ENCODE measurements at regions of chr1 and their contacts with region 1.

Region 1: GRCh38 chr1:156212833-156213643 is at the start of gene PMF1:
- DNase-seq: peak; percentile 92
- ATAC-seq: peak; percentile 98
- H3K4me3 ChIP-seq: peak within 1 kb of the TSS; percentile 75 to 88 (median 82)
- H3K27ac ChIP-seq: peak within 1 kb of the TSS; percentile 99
- H3K4me1 ChIP-seq: peaks cover 36% of the 10 kb centered on the region
- H3K27me3 ChIP-seq: no peaks in the 10 kb centered on the region; a peak in 1 of 5 replicates
- CTCF ChIP-seq: no peak
- EP300 ChIP-seq: no peak
- POLR2A ChIP-seq: peak; percentile 82 to 92
- RAD21 ChIP-seq: no peak; the same call in 1 of the 2 replicates
- total RNA-seq, gene PMF1: 89.0 and 94.7 TPM in 2 replicates

Region 2: GRCh38 chr1:155706091-155706619 is 506.9 kb before region 1 on chr1:
- CTCF ChIA-PET with region 1: no interaction called
- POLR2A ChIA-PET with region 1: no interaction called
- in situ Hi-C with region 1: no loop called
- intact Hi-C with region 1: no loop called
- DNase-seq: no peak
- ATAC-seq: no peak
- H3K4me3 ChIP-seq: no peak overlapping the region
- H3K27ac ChIP-seq: no peak overlapping the region
- H3K4me1 ChIP-seq: no peaks in the 10 kb centered on the region
- H3K27me3 ChIP-seq: no peaks in the 10 kb centered on the region; a peak in 1 of 5 replicates
- CTCF ChIP-seq: no peak
- EP300 ChIP-seq: no peak
- POLR2A ChIP-seq: no peak
- RAD21 ChIP-seq: no peak

Region 3: GRCh38 chr1:156129706-156130581 is 83.1 kb before region 1 on chr1:
- CTCF ChIA-PET with region 1: no interaction called
- POLR2A ChIA-PET with region 1: interaction called, 11 read pairs
- in situ Hi-C with region 1: no loop called
- intact Hi-C with region 1: no loop called
- DNase-seq: peak; percentile 98
- ATAC-seq: peak; percentile 90
- H3K4me3 ChIP-seq: peak overlapping the region in 1 of 3 experiments; percentile 9; a peak in 1 of 6 replicates
- H3K27ac ChIP-seq: peak overlapping the region; percentile 93
- H3K4me1 ChIP-seq: peaks cover 59% of the 10 kb centered on the region
- H3K27me3 ChIP-seq: no peaks in the 10 kb centered on the region
- CTCF ChIP-seq: peak; percentile 99
- EP300 ChIP-seq: peak; percentile 81 to 90; a peak in 3 of 4 replicates
- POLR2A ChIP-seq: peak in 1 of 2 experiments; percentile 75; a peak in 2 of 4 replicates
- RAD21 ChIP-seq: peak; percentile 99

Region 4: DNA sequence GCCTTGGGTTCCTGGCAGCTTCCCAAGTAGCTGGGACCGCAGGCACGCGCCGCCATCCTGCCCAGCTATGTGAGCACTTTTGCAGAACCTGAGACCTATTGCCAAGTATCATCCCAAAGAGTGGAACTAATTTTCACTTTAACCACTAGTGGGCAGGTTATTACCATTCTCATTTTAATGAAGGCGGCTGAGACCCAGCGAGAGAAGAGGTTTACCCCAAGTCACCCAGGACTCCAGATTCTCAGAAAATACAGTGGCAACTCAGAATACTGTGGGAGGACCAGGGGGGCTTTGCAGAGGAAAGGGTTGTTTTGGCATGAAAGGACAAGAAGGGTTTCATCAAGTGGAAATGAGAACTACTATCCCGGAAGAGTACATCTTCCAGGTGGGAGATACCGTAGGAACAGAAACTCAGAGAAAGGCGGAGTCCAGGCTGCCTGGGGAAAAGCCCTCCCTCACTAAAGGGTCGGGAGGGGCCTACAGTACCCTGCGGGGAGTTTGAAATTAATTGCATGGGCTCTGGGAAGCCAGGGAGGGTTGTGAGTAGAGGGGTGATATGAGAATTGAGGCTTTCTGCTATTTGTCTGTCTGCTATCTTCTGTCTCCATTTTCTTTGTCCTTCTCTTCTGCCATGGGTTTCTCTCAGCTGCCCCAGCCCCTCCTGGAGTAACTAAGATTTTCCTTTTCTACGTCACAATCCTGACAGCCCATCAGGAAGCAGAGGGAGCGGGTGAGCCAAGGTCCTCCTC is 66.8 kb before region 1 on chr1:
- CTCF ChIA-PET with region 1: no interaction called
- POLR2A ChIA-PET with region 1: interaction called, 37 read pairs
- in situ Hi-C with region 1: no loop called
- intact Hi-C with region 1: no loop called
- DNase-seq: peak; percentile 86
- ATAC-seq: peak; percentile 68
- H3K4me3 ChIP-seq: peak overlapping the region; percentile 44 to 63 (median 60)
- H3K27ac ChIP-seq: peak overlapping the region; percentile 31
- H3K4me1 ChIP-seq: peaks cover 59% of the 10 kb centered on the region
- H3K27me3 ChIP-seq: no peaks in the 10 kb centered on the region
- CTCF ChIP-seq: peak; percentile 92
- EP300 ChIP-seq: no peak
- POLR2A ChIP-seq: no peak
- RAD21 ChIP-seq: peak; percentile 92

Region 5: GRCh38 chr1:156177919-156178654 is 35.0 kb before region 1 on chr1:
- CTCF ChIA-PET with region 1: no interaction called
- POLR2A ChIA-PET with region 1: interaction called, 40 read pairs
- in situ Hi-C with region 1: no loop called
- intact Hi-C with region 1: no loop called
- DNase-seq: no peak
- ATAC-seq: no peak
- H3K4me3 ChIP-seq: no peak overlapping the region
- H3K27ac ChIP-seq: no peak overlapping the region
- H3K4me1 ChIP-seq: peaks cover 93% of the 10 kb centered on the region
- H3K27me3 ChIP-seq: no peaks in the 10 kb centered on the region
- CTCF ChIP-seq: no peak
- EP300 ChIP-seq: no peak
- POLR2A ChIP-seq: no peak
- RAD21 ChIP-seq: no peak

Region 6: GRCh38 chr1:156198831-156199349 is 14.1 kb before region 1 on chr1:
- CTCF ChIA-PET with region 1: no interaction called
- POLR2A ChIA-PET with region 1: interaction called, 32 read pairs
- in situ Hi-C with region 1: no loop called
- intact Hi-C with region 1: no loop called
- DNase-seq: no peak
- ATAC-seq: no peak
- H3K4me3 ChIP-seq: no peak overlapping the region
- H3K27ac ChIP-seq: peak overlapping the region; percentile 15
- H3K4me1 ChIP-seq: peaks cover 50% of the 10 kb centered on the region
- H3K27me3 ChIP-seq: no peaks in the 10 kb centered on the region; a peak in 1 of 5 replicates
- CTCF ChIP-seq: no peak
- EP300 ChIP-seq: no peak
- POLR2A ChIP-seq: no peak
- RAD21 ChIP-seq: no peak

Region 7: DNA sequence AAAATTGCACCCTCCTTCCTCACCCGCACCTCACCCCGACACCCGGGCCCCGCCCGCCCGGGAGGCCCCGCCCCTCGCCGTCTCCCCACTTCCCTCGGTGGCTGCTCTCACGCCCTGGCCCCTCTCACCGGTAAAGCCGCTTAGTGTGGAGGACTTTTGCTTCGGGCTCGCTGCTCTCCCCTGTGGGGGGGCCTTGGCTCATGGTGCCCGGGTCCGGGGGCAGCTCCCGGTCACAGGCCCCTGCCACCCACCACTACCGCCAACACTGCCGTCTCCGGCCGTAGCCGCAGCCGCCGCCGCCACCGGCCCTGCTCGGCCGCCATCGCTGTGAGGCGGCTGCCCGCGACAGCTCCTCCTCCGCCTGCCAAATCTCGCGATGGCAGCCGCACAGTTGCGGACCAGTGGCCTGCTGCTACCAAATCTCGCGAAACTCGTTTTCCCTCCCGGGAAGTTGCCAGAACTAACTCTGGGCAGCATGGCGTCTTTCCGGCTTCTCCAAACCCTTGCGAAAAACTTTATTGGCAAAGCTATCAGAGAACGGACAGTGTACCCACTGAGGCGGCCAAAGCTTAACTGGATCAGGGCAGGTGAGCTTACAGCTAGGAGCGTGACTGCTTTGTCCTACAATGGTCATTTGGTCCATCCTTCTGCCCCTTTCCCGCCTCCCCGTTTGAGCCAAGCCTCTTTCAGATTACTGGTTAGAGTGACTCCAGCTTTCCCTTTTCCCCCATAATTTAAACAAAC is 69.6 kb after region 1 on chr1 and contains the start of gene SMG5:
- CTCF ChIA-PET with region 1: no interaction called
- POLR2A ChIA-PET with region 1: interaction called, 12 read pairs
- in situ Hi-C with region 1: no loop called
- intact Hi-C with region 1: no loop called
- DNase-seq: peak; percentile 97
- ATAC-seq: peak; percentile 93
- H3K4me3 ChIP-seq: peak within 1 kb of the TSS; percentile 71 to 95 (median 87)
- H3K27ac ChIP-seq: peak within 1 kb of the TSS; percentile 78
- H3K4me1 ChIP-seq: peaks cover 33% of the 10 kb centered on the region
- H3K27me3 ChIP-seq: no peaks in the 10 kb centered on the region; a peak in 1 of 5 replicates
- CTCF ChIP-seq: no peak
- EP300 ChIP-seq: peak in 1 of 2 experiments; percentile 59; a peak in 1 of 4 replicates
- POLR2A ChIP-seq: peak; percentile 90 to 91
- RAD21 ChIP-seq: 0 out of 2 replicates have a peak, but pooled peaks have one; percentile 10
- total RNA-seq, gene SMG5: 63.3 and 84.0 TPM in 2 replicates